ENCODE measurements at regions of chr3 and their contacts with region 1.

Region 1: GRCh38 chr3:16511681-16512434 is 1.6 kb downstream of the RFTN1 start:
- DNase-seq: peak in 4 of 5 donors; percentile 64 to 77 (median 68)
- ATAC-seq: peak; percentile 39 to 66 (median 58)
- H3K4me3 ChIP-seq: peak overlapping the region; percentile 65 to 94 (median 86)
- H3K27ac ChIP-seq: peak overlapping the region; percentile 69 to 94 (median 90)
- H3K4me1 ChIP-seq: peaks cover 5 to 87% (median 57%) of the 10 kb centered on the region in 12 donors
- H3K27me3 ChIP-seq: no peaks in the 10 kb centered on the region
- CTCF ChIP-seq: no peak
- POLR2A ChIP-seq: peak in 1 of 2 donors; percentile 9

Region 2: DNA sequence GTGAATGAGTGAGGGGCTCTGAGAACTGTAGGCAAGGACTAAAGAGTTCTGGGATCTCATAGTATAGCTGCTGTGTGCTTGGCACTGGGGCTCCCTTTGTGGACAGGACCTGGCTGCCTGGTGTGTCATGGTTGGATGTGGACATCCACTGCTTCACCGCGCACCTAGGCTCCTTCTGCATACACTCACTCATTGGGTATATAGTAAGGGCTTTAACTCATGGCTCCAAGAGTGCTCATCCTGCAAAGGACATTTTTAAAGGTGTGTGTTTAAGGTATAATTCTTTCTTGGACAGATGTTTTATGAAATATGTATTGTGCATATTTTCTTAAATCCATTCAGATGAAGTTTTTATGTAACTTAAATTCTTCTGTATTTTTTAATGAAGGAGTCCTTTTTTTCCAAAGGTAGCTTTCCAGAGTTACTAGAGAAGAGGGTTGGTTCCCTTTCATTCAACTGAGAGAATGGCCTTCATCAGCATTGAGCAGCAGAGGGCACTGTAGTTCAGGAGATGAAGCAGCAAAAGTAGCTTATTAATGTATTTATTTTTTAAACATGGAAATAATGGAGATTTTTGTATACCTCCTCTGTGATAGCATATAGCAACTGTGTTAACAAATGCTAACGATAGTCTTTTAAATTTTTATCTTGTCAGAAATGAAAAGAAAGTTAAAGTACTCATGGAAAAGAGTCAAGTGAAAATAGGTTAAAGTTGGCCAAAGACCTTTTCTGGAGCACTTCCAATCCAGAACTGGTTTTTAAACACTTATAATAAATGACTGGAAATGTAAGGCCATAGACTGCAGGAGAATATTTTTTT is 221.6 kb before region 1 on chr3:
- intact Hi-C with region 1: loop called in 9 of 10 experiments (anchors 1 to 10 kb)
- DNase-seq: peak in 4 of 5 donors; percentile 32 to 51 (median 42)
- ATAC-seq: peak in 1 of 4 donors; percentile 30
- H3K4me3 ChIP-seq: peak overlapping the region in 1 of 12 donors; percentile 2
- H3K27ac ChIP-seq: peak overlapping the region in 10 of 12 donors; percentile 12 to 88 (median 62)
- H3K4me1 ChIP-seq: peaks cover 3 to 75% (median 53%) of the 10 kb centered on the region in 12 donors
- H3K27me3 ChIP-seq: no peaks in the 10 kb centered on the region
- CTCF ChIP-seq: peak; percentile 49 to 92 (median 86)
- POLR2A ChIP-seq: no peak

Region 3: GRCh38 chr3:16370872-16371740 is 140.8 kb before region 1 on chr3:
- intact Hi-C with region 1: loop called in 5 of 10 experiments (anchors 5 to 10 kb)
- DNase-seq: peak in 2 of 5 donors; percentile 45 to 57
- ATAC-seq: peak; percentile 17 to 53 (median 48)
- H3K4me3 ChIP-seq: no peak overlapping the region
- H3K27ac ChIP-seq: peak overlapping the region in 11 of 12 donors; percentile 50 to 78 (median 70)
- H3K4me1 ChIP-seq: peaks cover 27 to 91% (median 67%) of the 10 kb centered on the region in 12 donors
- H3K27me3 ChIP-seq: no peaks in the 10 kb centered on the region
- CTCF ChIP-seq: no peak
- POLR2A ChIP-seq: no peak

Region 4: GRCh38 chr3:16378920-16379319 is 132.9 kb before region 1 on chr3:
- intact Hi-C with region 1: loop called in 6 of 10 experiments (anchors 5 to 10 kb)
- DNase-seq: no peak
- ATAC-seq: no peak
- H3K4me3 ChIP-seq: no peak overlapping the region
- H3K27ac ChIP-seq: peak overlapping the region in 1 of 12 donors; percentile 23
- H3K4me1 ChIP-seq: peaks cover under 1 to 65% (median 33%) of the 10 kb centered on the region in 12 donors
- H3K27me3 ChIP-seq: no peaks in the 10 kb centered on the region
- CTCF ChIP-seq: no peak
- POLR2A ChIP-seq: no peak

Region 5: DNA sequence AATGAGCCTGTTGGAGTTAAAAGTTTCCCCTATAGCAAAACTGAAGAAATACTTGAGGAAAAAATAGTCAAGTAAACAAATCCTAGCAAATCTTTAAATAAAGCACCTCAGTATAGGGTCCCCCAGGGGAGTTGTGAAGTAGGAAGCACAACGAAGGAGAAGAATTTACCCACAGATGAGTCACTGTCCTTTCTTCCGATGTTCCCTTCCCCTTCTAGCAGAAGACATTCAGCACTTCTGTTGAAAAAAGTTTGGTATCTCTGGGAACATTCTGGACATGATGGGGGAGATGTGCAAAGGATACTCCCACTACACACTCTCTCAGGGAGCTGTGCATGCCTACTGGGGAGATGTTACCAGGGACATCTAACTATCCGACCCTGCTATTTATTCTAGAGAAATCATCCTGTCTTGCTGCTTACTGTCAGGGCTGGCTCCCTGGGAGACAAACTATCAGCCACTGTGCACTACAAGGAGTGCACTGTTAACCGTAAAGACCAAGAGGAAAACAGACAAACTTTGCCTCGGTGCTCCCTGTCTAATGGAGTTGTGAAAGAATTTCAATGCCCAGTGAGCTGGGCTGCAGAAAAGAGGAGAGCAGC is 92.1 kb before region 1 on chr3:
- intact Hi-C with region 1: loop called in 1 of 10 experiments (anchors 5 kb)
- DNase-seq: no peak
- ATAC-seq: peak in 1 of 4 donors; percentile 52
- H3K4me3 ChIP-seq: no peak overlapping the region
- H3K27ac ChIP-seq: peak overlapping the region in 7 of 12 donors; percentile 12 to 57 (median 42)
- H3K4me1 ChIP-seq: peaks cover 0 to 48% (median 25%) of the 10 kb centered on the region in 12 donors
- H3K27me3 ChIP-seq: no peaks in the 10 kb centered on the region
- CTCF ChIP-seq: no peak
- POLR2A ChIP-seq: no peak

Region 6: DNA sequence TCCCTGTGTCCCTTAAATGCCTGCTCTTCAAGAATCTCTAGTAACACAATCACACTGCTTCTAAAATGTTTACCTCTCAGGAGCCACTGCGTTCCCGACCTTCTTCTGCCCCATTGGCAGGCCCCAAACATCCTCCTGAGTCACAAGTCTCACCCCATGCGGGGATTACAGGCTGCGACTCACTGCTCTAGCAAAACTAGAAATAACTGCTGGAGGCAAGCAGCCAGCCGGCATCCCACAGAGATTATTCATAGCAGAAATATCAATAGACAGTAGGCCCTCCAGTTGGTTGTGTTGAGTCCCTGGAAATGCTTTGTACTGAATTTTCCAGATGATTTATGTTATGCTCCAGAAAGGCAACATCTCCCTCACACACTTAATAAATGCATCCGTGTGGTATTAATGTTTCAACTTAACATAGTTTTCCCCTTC is 63.2 kb before region 1 on chr3:
- intact Hi-C with region 1: loop called in 2 of 10 experiments (anchors 10 kb)
- DNase-seq: peak; percentile 63 to 81 (median 73)
- ATAC-seq: peak; percentile 58 to 90 (median 80)
- H3K4me3 ChIP-seq: no peak overlapping the region
- H3K27ac ChIP-seq: peak overlapping the region in 11 of 12 donors; percentile 0 to 66 (median 51)
- H3K4me1 ChIP-seq: peaks cover 4 to 37% (median 25%) of the 10 kb centered on the region in 12 donors
- H3K27me3 ChIP-seq: no peaks in the 10 kb centered on the region
- CTCF ChIP-seq: no peak
- POLR2A ChIP-seq: no peak

Region 7: DNA sequence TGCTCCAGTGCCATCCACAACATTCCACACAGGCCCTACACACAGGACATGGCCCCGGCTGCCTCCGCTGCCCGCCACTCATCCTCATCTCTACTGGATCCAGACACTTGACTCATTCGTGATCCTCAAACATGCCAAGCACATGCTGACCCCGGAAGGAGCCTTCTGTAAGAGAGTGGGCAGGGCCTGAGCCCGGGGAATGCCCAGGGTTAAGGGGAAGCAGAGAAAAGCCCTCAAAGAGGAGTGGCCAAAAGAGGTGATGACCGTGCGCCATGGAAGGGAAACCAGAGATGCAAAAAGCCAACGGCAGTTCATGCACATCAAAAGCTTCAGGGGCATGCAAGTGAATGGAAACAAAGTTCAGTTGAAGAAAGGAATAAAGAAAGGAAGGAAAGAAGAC is 44.5 kb before region 1 on chr3:
- intact Hi-C with region 1: loop called in 1 of 10 experiments (anchors 5 kb)
- DNase-seq: no peak
- ATAC-seq: no peak
- H3K4me3 ChIP-seq: no peak overlapping the region
- H3K27ac ChIP-seq: peak overlapping the region in 8 of 12 donors; percentile 5 to 70 (median 46)
- H3K4me1 ChIP-seq: peaks cover 0 to 62% (median 45%) of the 10 kb centered on the region in 12 donors
- H3K27me3 ChIP-seq: no peaks in the 10 kb centered on the region
- CTCF ChIP-seq: no peak
- POLR2A ChIP-seq: no peak

Region 8: GRCh38 chr3:16477521-16477920 is 34.3 kb before region 1 on chr3:
- intact Hi-C with region 1: no loop called
- DNase-seq: no peak
- ATAC-seq: no peak
- H3K4me3 ChIP-seq: no peak overlapping the region
- H3K27ac ChIP-seq: peak overlapping the region in 2 of 12 donors; percentile 4 to 10
- H3K4me1 ChIP-seq: peaks cover 0 to 65% (median 31%) of the 10 kb centered on the region in 12 donors
- H3K27me3 ChIP-seq: no peaks in the 10 kb centered on the region
- CTCF ChIP-seq: no peak
- POLR2A ChIP-seq: no peak

Region 9: GRCh38 chr3:16647668-16648067 is 135.8 kb after region 1 on chr3:
- intact Hi-C with region 1: no loop called
- DNase-seq: no peak
- ATAC-seq: no peak
- H3K4me3 ChIP-seq: no peak overlapping the region
- H3K27ac ChIP-seq: no peak overlapping the region
- H3K4me1 ChIP-seq: no peaks in the 10 kb centered on the region
- H3K27me3 ChIP-seq: no peaks in the 10 kb centered on the region
- CTCF ChIP-seq: no peak
- POLR2A ChIP-seq: no peak